ENCODE measurements at regions of chr3 and their contacts with region 1.

Region 1: GRCh38 chr3:183385698-183386613 is 42.5 kb downstream of the MCF2L2 start:
- DNase-seq: peak; percentile 16 to 81 (median 46)
- ATAC-seq: peak; percentile 81
- H3K4me3 ChIP-seq: no peak overlapping the region
- H3K4me3 Mint-ChIP-seq: no peak overlapping the region
- H3K27ac ChIP-seq: no peak overlapping the region
- H3K27ac Mint-ChIP-seq: no peak overlapping the region
- H3K4me1 ChIP-seq: no peaks in the 10 kb centered on the region
- H3K4me1 Mint-ChIP-seq: no peaks in the 10 kb centered on the region
- H3K27me3 ChIP-seq: no peaks in the 10 kb centered on the region
- H3K27me3 Mint-ChIP-seq: no peaks in the 10 kb centered on the region
- CTCF ChIP-seq: peak; percentile 77

Region 2: DNA sequence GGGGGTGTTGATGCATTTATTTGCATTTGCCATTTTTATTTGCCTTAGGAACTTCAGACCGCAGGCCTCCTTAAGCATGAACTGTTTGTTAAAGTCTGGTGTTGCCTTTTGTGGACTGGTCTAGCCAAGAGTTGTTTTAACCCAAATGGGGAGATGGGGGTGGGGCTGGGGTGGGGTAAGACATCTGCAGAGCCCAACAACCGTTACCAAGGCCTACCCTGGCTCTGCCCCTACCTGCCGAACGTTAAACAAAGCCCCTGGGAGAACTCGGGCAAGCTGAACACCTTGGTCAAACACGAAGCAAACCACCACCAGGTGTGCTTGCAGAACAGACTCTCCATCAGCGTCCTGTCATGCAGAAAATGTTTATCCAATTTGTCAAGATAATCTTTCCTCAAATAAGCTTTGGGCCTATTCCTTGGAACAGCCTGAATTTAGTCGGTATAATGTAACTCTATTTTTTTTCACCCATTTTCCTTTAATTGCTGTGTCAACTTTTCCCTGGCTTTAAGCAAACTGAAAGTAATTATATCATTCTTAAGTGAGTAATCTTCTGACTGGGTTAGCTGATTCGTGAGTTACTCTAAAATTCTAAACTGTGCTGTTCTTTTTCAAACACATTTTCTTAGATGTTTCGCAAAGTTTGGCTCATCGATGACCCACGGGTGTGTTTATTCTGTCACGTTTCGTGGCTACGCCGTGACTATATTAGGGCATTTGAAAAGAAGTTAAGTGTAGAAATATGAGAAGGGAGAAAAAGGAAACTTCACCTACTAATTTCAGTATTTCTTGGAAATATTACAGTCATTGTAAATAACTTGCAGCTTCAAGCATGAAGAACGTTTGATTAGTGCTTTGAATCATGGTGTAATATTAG is 1546.7 kb before region 1 on chr3:
- CTCF ChIA-PET with region 1: no interaction called
- POLR2A ChIA-PET with region 1: no interaction called
- intact Hi-C with region 1: no loop called
- DNase-seq: no peak
- ATAC-seq: no peak
- H3K4me3 ChIP-seq: no peak overlapping the region
- H3K4me3 Mint-ChIP-seq: no peak overlapping the region
- H3K27ac ChIP-seq: no peak overlapping the region
- H3K27ac Mint-ChIP-seq: no peak overlapping the region
- H3K4me1 ChIP-seq: no peaks in the 10 kb centered on the region
- H3K4me1 Mint-ChIP-seq: no peaks in the 10 kb centered on the region
- H3K27me3 ChIP-seq: no peaks in the 10 kb centered on the region
- H3K27me3 Mint-ChIP-seq: no peaks in the 10 kb centered on the region
- CTCF ChIP-seq: no peak

Region 3: GRCh38 chr3:182713743-182714517 is 672.0 kb before region 1 on chr3:
- CTCF ChIA-PET with region 1: no interaction called
- POLR2A ChIA-PET with region 1: no interaction called
- intact Hi-C with region 1: loop called (anchors 5 to 10 kb)
- DNase-seq: peak in 4 of 14 experiments; percentile 10 to 62 (median 54)
- ATAC-seq: peak; percentile 59
- H3K4me3 ChIP-seq: no peak overlapping the region
- H3K4me3 Mint-ChIP-seq: no peak overlapping the region
- H3K27ac ChIP-seq: no peak overlapping the region
- H3K27ac Mint-ChIP-seq: no peak overlapping the region
- H3K4me1 ChIP-seq: no peaks in the 10 kb centered on the region
- H3K4me1 Mint-ChIP-seq: no peaks in the 10 kb centered on the region
- H3K27me3 ChIP-seq: no peaks in the 10 kb centered on the region
- H3K27me3 Mint-ChIP-seq: no peaks in the 10 kb centered on the region
- CTCF ChIP-seq: peak; percentile 72

Region 4: GRCh38 chr3:182909318-182910040 is 476.5 kb before region 1 on chr3:
- CTCF ChIA-PET with region 1: no interaction called
- POLR2A ChIA-PET with region 1: no interaction called
- intact Hi-C with region 1: loop called in 1 of 2 experiments (anchors 5 kb)
- DNase-seq: peak in 3 of 14 experiments; percentile 30 to 34 (median 34)
- ATAC-seq: peak; percentile 30
- H3K4me3 ChIP-seq: no peak overlapping the region
- H3K4me3 Mint-ChIP-seq: no peak overlapping the region
- H3K27ac ChIP-seq: no peak overlapping the region
- H3K27ac Mint-ChIP-seq: peak overlapping the region; percentile 66
- H3K4me1 ChIP-seq: peaks cover 21% of the 10 kb centered on the region
- H3K4me1 Mint-ChIP-seq: peaks cover 51% of the 10 kb centered on the region
- H3K27me3 ChIP-seq: no peaks in the 10 kb centered on the region
- H3K27me3 Mint-ChIP-seq: no peaks in the 10 kb centered on the region
- CTCF ChIP-seq: peak; percentile 71

Region 5: GRCh38 chr3:183122257-183122932 is 263.6 kb before region 1 on chr3:
- CTCF ChIA-PET with region 1: interaction called, 30 read pairs
- POLR2A ChIA-PET with region 1: no interaction called
- intact Hi-C with region 1: loop called (anchors 1 kb)
- DNase-seq: peak in 4 of 14 experiments; percentile 14 to 73 (median 64)
- ATAC-seq: peak; percentile 73
- H3K4me3 ChIP-seq: no peak overlapping the region
- H3K4me3 Mint-ChIP-seq: no peak overlapping the region
- H3K27ac ChIP-seq: no peak overlapping the region
- H3K27ac Mint-ChIP-seq: no peak overlapping the region
- H3K4me1 ChIP-seq: no peaks in the 10 kb centered on the region
- H3K4me1 Mint-ChIP-seq: no peaks in the 10 kb centered on the region
- H3K27me3 ChIP-seq: no peaks in the 10 kb centered on the region
- H3K27me3 Mint-ChIP-seq: peaks cover 4% of the 10 kb centered on the region
- CTCF ChIP-seq: peak; percentile 92

Region 6: DNA sequence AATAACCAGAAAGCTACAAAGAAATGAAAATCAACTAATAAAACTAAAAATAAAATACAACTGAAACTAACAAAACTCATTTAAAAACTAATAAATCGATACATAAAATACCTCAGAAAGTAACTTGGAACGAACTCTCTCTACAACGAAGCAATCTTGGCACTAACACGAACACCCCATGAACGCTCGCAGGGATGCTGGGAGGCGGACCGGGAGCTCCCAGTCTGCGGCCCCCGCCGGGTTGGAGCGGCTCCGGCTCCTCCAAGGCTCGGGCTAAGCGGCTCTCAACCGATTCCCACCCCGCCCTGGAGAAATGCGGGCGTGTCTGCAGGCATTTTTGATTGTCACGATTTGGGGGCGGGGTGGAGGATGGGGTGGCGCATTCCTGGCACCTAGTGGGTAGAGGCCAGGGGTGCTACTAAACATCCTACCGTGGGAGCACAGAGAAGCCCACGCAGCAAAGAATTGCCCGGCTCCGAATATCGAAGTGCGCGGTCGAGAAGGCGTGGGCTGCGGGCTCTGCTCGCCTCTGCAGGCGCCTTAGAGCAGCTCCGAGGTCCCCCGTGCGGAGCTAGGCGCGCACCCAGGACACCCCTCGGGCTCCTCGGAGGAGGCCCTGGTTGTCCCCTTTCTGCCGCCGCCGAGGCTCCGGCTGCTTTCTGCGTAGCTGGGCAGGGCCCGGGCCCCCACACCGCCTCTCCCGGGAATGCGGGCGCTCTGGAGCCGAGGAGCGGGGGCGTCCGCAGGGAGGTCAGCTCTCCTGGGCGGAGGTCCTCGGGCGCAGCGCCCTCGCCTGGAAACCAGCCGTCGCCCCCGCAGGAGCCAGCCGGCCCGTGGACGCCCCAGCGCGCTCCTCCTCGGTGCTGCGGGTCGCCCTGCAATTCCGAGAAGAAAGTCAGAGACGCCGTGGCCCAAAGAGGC is 207.1 kb before region 1 on chr3:
- CTCF ChIA-PET with region 1: interaction called, 23 read pairs
- POLR2A ChIA-PET with region 1: no interaction called
- intact Hi-C with region 1: loop called (anchors 1 kb)
- DNase-seq: peak in 9 of 14 experiments; percentile 10 to 53 (median 26)
- ATAC-seq: peak; percentile 72
- H3K4me3 ChIP-seq: peak overlapping the region; percentile 53
- H3K4me3 Mint-ChIP-seq: peak overlapping the region; percentile 74
- H3K27ac ChIP-seq: no peak overlapping the region
- H3K27ac Mint-ChIP-seq: no peak overlapping the region
- H3K4me1 ChIP-seq: peaks cover 14% of the 10 kb centered on the region
- H3K4me1 Mint-ChIP-seq: peaks cover 9% of the 10 kb centered on the region
- H3K27me3 ChIP-seq: peaks cover 18 to 26% of the 10 kb centered on the region in 2 experiments
- H3K27me3 Mint-ChIP-seq: peaks cover 39% of the 10 kb centered on the region
- CTCF ChIP-seq: no peak

Region 7: GRCh38 chr3:183285828-183286457 is 100.0 kb before region 1 on chr3:
- CTCF ChIA-PET with region 1: interaction called, 9 read pairs
- POLR2A ChIA-PET with region 1: no interaction called
- intact Hi-C with region 1: loop called in 1 of 2 experiments (anchors 10 kb)
- DNase-seq: peak; percentile 76 to 98 (median 84)
- ATAC-seq: peak; percentile 90
- H3K4me3 ChIP-seq: no peak overlapping the region
- H3K4me3 Mint-ChIP-seq: peak overlapping the region; percentile 39
- H3K27ac ChIP-seq: peak overlapping the region; percentile 44 to 84
- H3K27ac Mint-ChIP-seq: peak overlapping the region; percentile 88
- H3K4me1 ChIP-seq: peaks cover 13% of the 10 kb centered on the region
- H3K4me1 Mint-ChIP-seq: peaks cover 28% of the 10 kb centered on the region
- H3K27me3 ChIP-seq: no peaks in the 10 kb centered on the region
- H3K27me3 Mint-ChIP-seq: no peaks in the 10 kb centered on the region
- CTCF ChIP-seq: no peak

Region 8: GRCh38 chr3:183766745-183767606 is 381.0 kb after region 1 on chr3:
- CTCF ChIA-PET with region 1: no interaction called
- POLR2A ChIA-PET with region 1: no interaction called
- intact Hi-C with region 1: loop called (anchors 2 to 5 kb)
- DNase-seq: peak; percentile 53 to 84 (median 64)
- ATAC-seq: peak; percentile 90
- H3K4me3 ChIP-seq: no peak overlapping the region
- H3K4me3 Mint-ChIP-seq: no peak overlapping the region
- H3K27ac ChIP-seq: no peak overlapping the region
- H3K27ac Mint-ChIP-seq: peak overlapping the region; percentile 47
- H3K4me1 ChIP-seq: peaks cover 10% of the 10 kb centered on the region
- H3K4me1 Mint-ChIP-seq: peaks cover 15% of the 10 kb centered on the region
- H3K27me3 ChIP-seq: no peaks in the 10 kb centered on the region
- H3K27me3 Mint-ChIP-seq: no peaks in the 10 kb centered on the region
- CTCF ChIP-seq: peak; percentile 91